Cardiac septum (tissue), 1 donor: ENCODE measurements at regions of chr14 and their contacts with region 1.

Region 1: GRCh38 chr14:24873551-24873950 is 176.4 kb downstream of the STXBP6 start:
- DNase-seq: no peak

Region 2: GRCh38 chr14:24858052-24858451 is 15.5 kb before region 1 on chr14:
- intact Hi-C with region 1: loop called (anchors 2 kb)
- DNase-seq: no peak